Common myeloid progenitor, CD34-positive (primary cell): ENCODE measurements at regions of chr4 and their contacts with region 1.

Region 1: DNA sequence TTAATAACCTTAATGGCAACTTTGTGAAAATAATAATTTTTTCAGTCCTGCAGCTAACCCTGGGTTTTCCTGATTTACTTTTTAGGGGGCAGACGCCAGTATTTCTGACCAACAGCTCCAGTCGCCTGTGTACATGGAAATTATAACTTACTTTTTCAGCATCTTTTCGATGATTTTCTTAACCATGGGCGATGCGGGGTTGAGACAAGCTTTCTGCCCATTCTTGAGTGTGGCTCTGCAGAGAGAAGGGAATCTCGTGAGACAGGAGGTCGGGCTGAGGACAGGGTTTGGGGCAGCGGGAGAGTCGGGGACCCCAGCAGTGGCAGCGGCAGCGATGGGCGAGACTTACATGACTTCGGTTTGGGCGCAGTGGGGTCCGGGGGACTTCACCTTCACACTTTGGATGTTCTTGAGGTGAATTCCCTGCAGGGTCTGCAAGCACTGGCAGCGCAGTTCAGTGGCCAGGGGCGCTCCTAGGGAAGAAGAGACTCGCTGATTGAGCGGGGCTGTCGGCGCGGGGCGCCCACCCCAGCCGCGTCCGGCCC is 473 bp downstream of the CXCL2 start:
- DNase-seq: peak in 1 of 3 donors; percentile 60
- H3K4me3 ChIP-seq: peak overlapping the region; percentile 56 to 93 (median 75)
- H3K27ac ChIP-seq: peak overlapping the region; percentile 76 to 85
- H3K4me1 ChIP-seq: peaks cover 15 to 69% (median 44%) of the 10 kb centered on the region in 4 experiments
- H3K27me3 ChIP-seq: no peaks in the 10 kb centered on the region

Region 2: DNA sequence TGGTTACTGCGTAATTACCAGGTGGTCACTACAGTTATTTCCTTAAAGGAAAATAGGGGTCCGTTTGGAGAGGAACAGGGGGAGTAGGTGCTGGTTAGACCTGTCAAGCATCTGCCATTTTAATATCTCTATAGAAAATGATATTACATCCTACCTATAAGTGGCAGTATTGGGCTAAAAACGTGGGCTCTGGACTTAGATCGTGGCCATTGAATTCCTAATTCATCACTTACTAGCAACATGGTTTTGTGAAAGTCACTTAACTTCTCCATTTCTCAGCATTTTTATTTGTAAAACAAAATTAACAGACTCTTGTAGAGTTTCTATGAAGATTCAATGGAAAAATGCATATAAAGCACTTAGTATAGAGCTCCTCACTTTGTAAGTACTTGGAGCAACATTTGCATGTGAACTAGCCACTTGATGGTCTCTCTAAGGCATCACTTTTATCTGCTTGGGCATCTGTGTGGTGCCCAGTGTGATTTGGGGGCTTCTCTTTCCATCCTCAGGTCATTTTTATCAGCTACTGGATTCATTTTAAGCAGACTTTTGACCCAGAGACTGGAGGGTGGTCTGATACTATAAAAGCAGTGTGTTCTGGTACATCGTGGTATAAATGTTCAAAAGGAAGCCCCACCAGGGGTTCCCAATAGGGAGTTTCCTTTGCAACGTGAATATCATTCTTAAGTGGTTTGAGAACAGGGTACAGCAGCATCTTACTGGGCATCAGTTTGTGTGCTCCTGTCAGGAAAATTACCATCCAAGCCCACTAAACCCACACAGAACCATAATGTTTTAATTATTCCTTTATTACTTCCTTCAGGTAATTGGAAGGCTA is 435.6 kb before region 1 on chr4:
- CTCF ChIA-PET with region 1: interaction called, 12 read pairs
- POLR2A ChIA-PET with region 1: interaction called, 3 read pairs
- DNase-seq: peak; percentile 61 to 81 (median 81)
- H3K4me3 ChIP-seq: no peak overlapping the region
- H3K27ac ChIP-seq: no peak overlapping the region
- H3K4me1 ChIP-seq: peaks cover 5 to 25% (median 12%) of the 10 kb centered on the region in 4 experiments
- H3K27me3 ChIP-seq: no peaks in the 10 kb centered on the region

Region 3: GRCh38 chr4:73929278-73929677 is 169.2 kb before region 1 on chr4:
- CTCF ChIA-PET with region 1: no interaction called
- POLR2A ChIA-PET with region 1: no interaction called
- DNase-seq: no peak
- H3K4me3 ChIP-seq: no peak overlapping the region
- H3K27ac ChIP-seq: no peak overlapping the region
- H3K4me1 ChIP-seq: no peaks in the 10 kb centered on the region
- H3K27me3 ChIP-seq: no peaks in the 10 kb centered on the region

Region 4: DNA sequence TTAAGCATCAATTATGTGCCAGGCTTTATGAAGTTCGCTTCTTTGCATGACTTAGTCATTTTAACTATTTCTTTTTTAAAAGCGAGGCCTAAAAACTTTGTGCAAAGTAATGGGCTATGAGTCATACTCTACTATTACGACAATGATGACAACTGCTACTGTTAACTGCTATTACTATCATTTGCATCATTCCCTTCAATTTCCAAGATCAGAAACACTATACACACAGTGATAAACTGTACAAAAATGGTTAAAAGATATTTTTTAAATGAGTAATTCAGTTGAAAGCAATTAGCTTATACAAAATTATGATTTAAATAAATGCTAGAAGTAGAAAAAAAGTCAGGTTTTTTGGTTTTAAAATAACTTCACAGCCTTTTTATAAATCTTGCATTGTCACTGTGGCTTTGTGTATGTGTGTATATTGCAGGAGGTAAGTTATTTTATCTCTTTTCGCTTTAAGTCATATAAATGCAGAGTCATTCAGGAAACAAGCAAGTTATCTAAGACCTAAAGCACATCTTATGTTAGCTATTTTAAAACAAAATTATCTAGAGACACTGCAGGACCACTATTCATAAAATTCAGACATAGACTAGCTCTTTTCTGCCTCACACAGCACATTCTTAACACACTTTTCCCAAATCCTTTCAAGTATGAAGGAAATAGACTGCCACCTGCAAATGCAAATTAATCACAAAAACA is 41.5 kb before region 1 on chr4:
- CTCF ChIA-PET with region 1: interaction called, 29 read pairs
- POLR2A ChIA-PET with region 1: interaction called, 4 read pairs
- DNase-seq: peak; percentile 85 to 95 (median 91)
- H3K4me3 ChIP-seq: peak overlapping the region in 1 of 7 experiments; percentile 1
- H3K27ac ChIP-seq: peak overlapping the region; percentile 74 to 91
- H3K4me1 ChIP-seq: peaks cover 10 to 51% (median 30%) of the 10 kb centered on the region in 4 experiments
- H3K27me3 ChIP-seq: no peaks in the 10 kb centered on the region

Region 5: DNA sequence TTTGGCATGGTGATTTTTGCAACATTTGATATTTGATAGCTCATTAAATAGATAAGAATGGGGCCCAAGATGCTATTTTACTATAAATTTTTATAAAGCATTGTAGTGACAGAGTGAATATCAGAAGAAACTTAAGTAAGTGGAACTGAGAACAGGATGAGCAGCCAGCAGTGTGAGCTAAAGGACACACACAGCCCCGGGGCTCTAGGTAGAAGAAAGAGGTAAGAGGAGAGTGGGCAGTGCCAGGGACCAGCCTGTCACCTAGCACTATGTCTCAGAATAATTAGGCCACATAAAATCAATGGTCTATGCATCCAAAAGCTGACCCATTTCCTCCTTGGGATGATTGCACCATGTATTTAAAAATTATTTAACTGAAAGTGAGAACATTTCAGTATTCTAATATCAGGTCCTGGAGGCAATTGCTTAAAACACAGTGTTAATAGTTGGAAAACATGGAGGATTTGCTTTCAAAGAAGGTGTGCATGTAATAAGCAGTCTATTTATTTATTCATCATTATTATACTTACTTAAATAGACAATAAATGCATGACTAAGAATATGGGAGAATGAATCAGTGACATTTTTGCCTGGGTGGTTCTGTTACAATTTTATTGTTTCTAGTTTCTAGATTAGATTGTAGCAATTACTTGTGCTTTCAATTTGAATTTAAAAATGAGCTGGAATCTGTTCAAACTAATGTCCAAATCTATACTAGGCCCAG is 491.8 kb after region 1 on chr4:
- CTCF ChIA-PET with region 1: no interaction called
- POLR2A ChIA-PET with region 1: no interaction called
- DNase-seq: no peak
- H3K4me3 ChIP-seq: no peak overlapping the region
- H3K27ac ChIP-seq: no peak overlapping the region
- H3K4me1 ChIP-seq: no peaks in the 10 kb centered on the region
- H3K27me3 ChIP-seq: no peaks in the 10 kb centered on the region